Head of caudate nucleus (tissue), 42 donors: ENCODE measurements at regions of chr1 and their contacts with region 1.

Region 1: DNA sequence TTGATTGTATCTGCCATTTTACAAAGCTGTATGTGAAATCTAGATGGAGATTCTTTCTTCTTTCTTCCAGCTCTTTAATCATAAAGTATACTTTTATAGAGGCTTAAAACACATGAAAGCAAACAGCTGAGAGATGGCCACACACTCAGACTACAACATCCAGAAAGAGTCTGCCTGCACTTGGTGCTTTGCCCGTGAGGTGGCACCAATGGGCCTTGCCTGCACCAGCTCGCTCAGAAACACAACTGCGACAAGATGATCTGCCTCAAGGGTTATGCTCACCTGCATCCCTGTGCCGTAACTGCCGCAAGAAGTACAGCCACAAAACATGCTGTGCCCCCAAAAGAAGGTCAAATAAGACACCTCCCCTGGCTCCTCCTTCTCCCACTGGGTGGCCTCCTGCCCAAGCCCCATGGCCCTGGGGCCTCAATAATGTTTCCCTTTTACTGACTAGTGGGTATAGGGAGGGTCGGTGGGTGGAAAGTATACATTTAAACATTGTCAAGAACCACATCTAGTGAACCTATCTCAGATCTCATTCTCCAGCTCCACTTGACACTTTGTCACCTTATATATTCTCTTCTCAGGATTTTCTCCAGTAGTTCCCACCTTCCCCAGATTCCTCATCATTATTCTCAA is 66.7 kb upstream of the ANGPTL3 start:
- DNase-seq: peak; percentile 21 to 86 (median 72)

Region 2: DNA sequence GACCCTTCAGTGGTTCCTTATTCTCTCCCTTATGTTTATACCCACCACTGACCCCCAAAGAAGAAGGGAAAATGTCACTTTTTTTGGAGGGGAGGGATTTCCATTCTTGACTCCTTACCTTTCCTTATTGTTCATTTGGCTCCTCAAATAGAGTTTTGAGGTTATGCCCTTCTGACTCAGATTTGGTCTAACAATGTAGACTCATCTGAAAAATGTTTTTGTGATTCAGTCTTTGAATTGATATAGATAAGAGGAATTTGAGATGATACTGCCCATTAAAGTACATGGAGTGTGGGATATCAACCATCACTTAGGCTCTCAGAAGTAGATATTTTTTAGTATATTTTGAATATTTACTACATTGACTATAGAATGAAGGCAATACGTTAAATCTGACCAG is 77.7 kb before region 1 on chr1:
- intact Hi-C with region 1: no loop called
- DNase-seq: no peak

Region 3: GRCh38 chr1:62746085-62746808 is 215.6 kb after region 1 on chr1:
- intact Hi-C with region 1: loop called (anchors 10 kb)
- DNase-seq: no peak